ENCODE measurements at regions of chr19 and their contacts with region 1.

Region 1: GRCh38 chr19:41016488-41017071 is 25.5 kb downstream of the CYP2B6 start:
- DNase-seq: no peak
- ATAC-seq: no peak
- H3K4me3 ChIP-seq: no peak overlapping the region
- H3K27ac ChIP-seq: no peak overlapping the region
- H3K4me1 ChIP-seq: no peaks in the 10 kb centered on the region
- H3K27me3 ChIP-seq: peaks cover 0 to 47% (median 18%) of the 10 kb centered on the region in 7 donors
- CTCF ChIP-seq: no peak

Region 2: GRCh38 chr19:40982594-40983101 is 33.9 kb before region 1 on chr19:
- intact Hi-C with region 1: no loop called
- DNase-seq: no peak
- ATAC-seq: no peak
- H3K4me3 ChIP-seq: no peak overlapping the region
- H3K27ac ChIP-seq: no peak overlapping the region
- H3K4me1 ChIP-seq: no peaks in the 10 kb centered on the region
- H3K27me3 ChIP-seq: peaks cover 0 to 39% (median 21%) of the 10 kb centered on the region in 7 donors
- CTCF ChIP-seq: no peak

Region 3: GRCh38 chr19:41934849-41935374 is 918.3 kb after region 1 on chr19:
- intact Hi-C with region 1: loop called in 1 of 10 experiments (anchors 10 kb)
- DNase-seq: peak; percentile 63 to 76
- ATAC-seq: peak; percentile 48 to 85 (median 74)
- H3K4me3 ChIP-seq: no peak overlapping the region
- H3K27ac ChIP-seq: no peak overlapping the region
- H3K4me1 ChIP-seq: peaks cover 0 to 9% (median 2%) of the 10 kb centered on the region in 9 donors
- H3K27me3 ChIP-seq: peaks cover 13 to 84% (median 74%) of the 10 kb centered on the region in 7 donors
- CTCF ChIP-seq: peak; percentile 70 to 87 (median 81)